MCF 10A (cell line): ENCODE measurements at regions of chr9 and their contacts with region 1.

Region 1: GRCh38 chr9:124617471-124618141 is 110.4 kb upstream of the NR5A1 start:
- DNase-seq: peak; percentile 85
- H3K4me3 Mint-ChIP-seq: no peak overlapping the region
- H3K27ac Mint-ChIP-seq: no peak overlapping the region
- H3K4me1 Mint-ChIP-seq: peaks cover 13% of the 10 kb centered on the region
- H3K27me3 Mint-ChIP-seq: no peaks in the 10 kb centered on the region
- CTCF ChIP-seq: peak; percentile 88

Region 2: GRCh38 chr9:124594673-124595072 is 22.9 kb before region 1 on chr9:
- CTCF ChIA-PET with region 1: interaction called, 18 read pairs
- POLR2A ChIA-PET with region 1: no interaction called
- intact Hi-C with region 1: no loop called
- DNase-seq: no peak
- H3K4me3 Mint-ChIP-seq: no peak overlapping the region
- H3K27ac Mint-ChIP-seq: no peak overlapping the region
- H3K4me1 Mint-ChIP-seq: no peaks in the 10 kb centered on the region
- H3K27me3 Mint-ChIP-seq: no peaks in the 10 kb centered on the region
- CTCF ChIP-seq: no peak

Region 3: DNA sequence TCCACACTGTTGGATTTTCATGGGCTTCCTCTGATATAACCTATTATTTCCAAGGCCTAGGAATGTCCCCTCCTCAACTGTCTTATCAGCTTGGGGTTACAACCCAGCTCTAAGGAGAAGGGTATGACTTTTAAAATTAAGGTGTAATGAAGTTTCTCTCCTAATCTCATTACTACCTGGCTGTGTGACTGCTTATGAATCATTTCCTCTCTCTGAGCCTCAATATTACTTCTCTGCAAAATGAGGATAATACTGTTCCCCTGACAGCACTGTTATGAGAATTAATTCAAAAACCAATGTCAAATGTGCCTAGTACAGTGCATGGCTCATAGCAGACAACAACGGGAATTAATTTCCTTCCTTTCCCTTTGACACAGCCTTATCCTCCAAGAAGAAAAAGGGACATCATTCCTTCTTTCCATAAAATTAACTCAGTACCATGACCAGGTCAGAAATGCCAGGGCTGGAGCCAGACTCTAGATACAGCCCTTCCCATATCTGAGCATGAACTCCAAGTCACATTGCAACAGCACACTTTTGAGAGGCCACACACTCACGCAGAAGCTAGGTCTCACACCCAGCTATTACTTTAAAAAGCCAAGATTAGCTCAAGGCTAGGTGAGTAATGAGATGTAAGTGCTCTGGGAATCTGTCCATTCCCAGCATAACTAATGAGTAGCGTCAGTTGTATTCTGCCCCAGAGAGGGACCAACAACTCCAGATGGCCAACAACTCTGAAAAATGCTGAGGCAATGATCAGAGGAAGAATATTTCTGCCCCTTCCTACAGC is 34.8 kb after region 1 on chr9:
- CTCF ChIA-PET with region 1: interaction called, 44 read pairs
- POLR2A ChIA-PET with region 1: interaction called, 6 read pairs
- intact Hi-C with region 1: no loop called
- DNase-seq: peak; percentile 96
- H3K4me3 Mint-ChIP-seq: peak overlapping the region; percentile 33
- H3K27ac Mint-ChIP-seq: peak overlapping the region; percentile 68
- H3K4me1 Mint-ChIP-seq: peaks cover 39% of the 10 kb centered on the region
- H3K27me3 Mint-ChIP-seq: no peaks in the 10 kb centered on the region
- CTCF ChIP-seq: no peak

Region 4: GRCh38 chr9:124684169-124684568 is 66.6 kb after region 1 on chr9:
- CTCF ChIA-PET with region 1: interaction called, 10 read pairs
- POLR2A ChIA-PET with region 1: no interaction called
- intact Hi-C with region 1: no loop called
- DNase-seq: no peak
- H3K4me3 Mint-ChIP-seq: no peak overlapping the region
- H3K27ac Mint-ChIP-seq: no peak overlapping the region
- H3K4me1 Mint-ChIP-seq: no peaks in the 10 kb centered on the region
- H3K27me3 Mint-ChIP-seq: no peaks in the 10 kb centered on the region
- CTCF ChIP-seq: no peak

Region 5: DNA sequence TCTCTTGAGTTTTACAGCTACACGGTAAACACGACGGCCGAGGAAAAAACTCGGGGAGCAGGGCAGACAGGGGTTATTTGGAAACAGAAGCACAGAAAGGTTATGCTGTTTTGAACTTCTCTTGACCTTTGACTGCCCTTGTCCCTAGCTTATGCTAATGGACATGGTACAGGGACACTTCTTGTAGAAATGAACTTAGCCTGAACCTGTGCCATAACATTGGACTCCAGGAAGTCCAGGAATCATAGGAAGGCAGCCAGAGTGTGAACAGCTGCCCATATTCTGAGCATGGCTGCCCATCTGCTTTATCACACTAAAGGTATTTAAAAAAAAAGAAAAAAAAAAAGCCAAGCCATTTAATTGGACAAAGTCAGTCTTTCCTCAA is 107.5 kb after region 1 on chr9:
- CTCF ChIA-PET with region 1: interaction called, 12 read pairs
- POLR2A ChIA-PET with region 1: no interaction called
- intact Hi-C with region 1: no loop called
- DNase-seq: no peak
- H3K4me3 Mint-ChIP-seq: no peak overlapping the region
- H3K27ac Mint-ChIP-seq: no peak overlapping the region
- H3K4me1 Mint-ChIP-seq: no peaks in the 10 kb centered on the region
- H3K27me3 Mint-ChIP-seq: no peaks in the 10 kb centered on the region
- CTCF ChIP-seq: no peak

Region 6: DNA sequence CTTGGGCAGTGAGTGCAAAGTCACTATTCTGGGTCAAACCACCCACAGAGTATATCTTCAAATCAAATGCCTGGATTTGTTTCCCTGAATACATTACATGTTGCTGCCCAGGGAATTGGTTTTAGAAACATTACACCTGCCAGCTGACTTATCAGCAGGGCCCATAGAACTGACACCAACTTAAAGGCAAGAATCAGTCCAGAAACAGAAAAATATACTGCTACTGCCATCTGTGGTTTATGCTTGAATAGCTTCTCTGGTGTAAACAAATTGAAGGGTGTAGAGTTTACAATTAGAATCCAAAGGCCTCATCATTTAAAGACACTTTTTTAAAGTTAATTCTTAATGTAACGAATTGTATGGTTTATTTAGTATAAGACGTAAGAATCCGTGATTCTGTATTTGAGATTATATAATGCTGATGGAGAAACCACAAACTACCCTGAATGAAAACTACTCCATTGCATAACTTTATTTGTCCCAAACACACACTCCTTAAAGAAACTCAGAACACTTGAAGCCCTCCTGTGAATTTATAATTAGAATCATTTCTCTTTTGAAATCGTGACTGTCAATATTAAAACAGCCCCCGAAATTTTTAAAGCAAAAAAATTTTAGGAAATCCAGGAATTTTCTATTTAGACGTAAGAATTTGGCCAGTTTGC is 147.3 kb after region 1 on chr9:
- CTCF ChIA-PET with region 1: interaction called, 40 read pairs
- POLR2A ChIA-PET with region 1: no interaction called
- intact Hi-C with region 1: no loop called
- DNase-seq: peak; percentile 35
- H3K4me3 Mint-ChIP-seq: no peak overlapping the region
- H3K27ac Mint-ChIP-seq: no peak overlapping the region
- H3K4me1 Mint-ChIP-seq: peaks cover 11% of the 10 kb centered on the region
- H3K27me3 Mint-ChIP-seq: no peaks in the 10 kb centered on the region
- CTCF ChIP-seq: peak; percentile 37